Activated B cell treated with CpG ODN at 0.5 μM for 24 hours (primary cell): ENCODE measurements at regions of chr18 and their contacts with region 1.

Region 1: GRCh38 chr18:12890506-12890905 is 6.5 kb upstream of the PTPN2 start:
- DNase-seq: no peak
- ATAC-seq: no peak
- H3K4me3 Mint-ChIP-seq: no peak overlapping the region
- H3K27ac Mint-ChIP-seq: no peak overlapping the region
- H3K4me1 Mint-ChIP-seq: peaks cover 28% of the 10 kb centered on the region
- H3K27me3 Mint-ChIP-seq: peaks cover 7% of the 10 kb centered on the region
- CTCF ChIP-seq: no peak

Region 2: GRCh38 chr18:12391618-12392165 is 498.8 kb before region 1 on chr18:
- CTCF ChIA-PET with region 1: no interaction called
- POLR2A ChIA-PET with region 1: no interaction called
- intact Hi-C with region 1: loop called (anchors 5 kb)
- DNase-seq: no peak
- ATAC-seq: peak; percentile 98
- H3K4me3 Mint-ChIP-seq: no peak overlapping the region
- H3K27ac Mint-ChIP-seq: no peak overlapping the region
- H3K4me1 Mint-ChIP-seq: no peaks in the 10 kb centered on the region
- H3K27me3 Mint-ChIP-seq: peaks cover 13% of the 10 kb centered on the region
- CTCF ChIP-seq: no peak

Region 3: GRCh38 chr18:12726774-12727550 is 163.5 kb before region 1 on chr18:
- CTCF ChIA-PET with region 1: interaction called, 7 read pairs
- POLR2A ChIA-PET with region 1: interaction called, 7 read pairs
- intact Hi-C with region 1: loop called (anchors 1 kb)
- DNase-seq: no peak
- ATAC-seq: peak; percentile 60
- H3K4me3 Mint-ChIP-seq: no peak overlapping the region
- H3K27ac Mint-ChIP-seq: no peak overlapping the region
- H3K4me1 Mint-ChIP-seq: no peaks in the 10 kb centered on the region
- H3K27me3 Mint-ChIP-seq: no peaks in the 10 kb centered on the region
- CTCF ChIP-seq: peak; percentile 88

Region 4: GRCh38 chr18:12744103-12744502 is 146.4 kb before region 1 on chr18:
- CTCF ChIA-PET with region 1: interaction called, 16 read pairs
- POLR2A ChIA-PET with region 1: no interaction called
- intact Hi-C with region 1: loop called (anchors 1 kb)
- DNase-seq: no peak
- ATAC-seq: peak; percentile 47
- H3K4me3 Mint-ChIP-seq: no peak overlapping the region
- H3K27ac Mint-ChIP-seq: no peak overlapping the region
- H3K4me1 Mint-ChIP-seq: no peaks in the 10 kb centered on the region
- H3K27me3 Mint-ChIP-seq: peaks cover 7% of the 10 kb centered on the region
- CTCF ChIP-seq: no peak

Region 5: GRCh38 chr18:12934454-12935071 is 44.1 kb after region 1 on chr18:
- CTCF ChIA-PET with region 1: interaction called, 15 read pairs
- POLR2A ChIA-PET with region 1: no interaction called
- intact Hi-C with region 1: loop called (anchors 1 kb)
- DNase-seq: peak; percentile 62
- ATAC-seq: peak; percentile 89
- H3K4me3 Mint-ChIP-seq: no peak overlapping the region
- H3K27ac Mint-ChIP-seq: no peak overlapping the region
- H3K4me1 Mint-ChIP-seq: no peaks in the 10 kb centered on the region
- H3K27me3 Mint-ChIP-seq: peaks cover 3% of the 10 kb centered on the region
- CTCF ChIP-seq: no peak

Region 6: DNA sequence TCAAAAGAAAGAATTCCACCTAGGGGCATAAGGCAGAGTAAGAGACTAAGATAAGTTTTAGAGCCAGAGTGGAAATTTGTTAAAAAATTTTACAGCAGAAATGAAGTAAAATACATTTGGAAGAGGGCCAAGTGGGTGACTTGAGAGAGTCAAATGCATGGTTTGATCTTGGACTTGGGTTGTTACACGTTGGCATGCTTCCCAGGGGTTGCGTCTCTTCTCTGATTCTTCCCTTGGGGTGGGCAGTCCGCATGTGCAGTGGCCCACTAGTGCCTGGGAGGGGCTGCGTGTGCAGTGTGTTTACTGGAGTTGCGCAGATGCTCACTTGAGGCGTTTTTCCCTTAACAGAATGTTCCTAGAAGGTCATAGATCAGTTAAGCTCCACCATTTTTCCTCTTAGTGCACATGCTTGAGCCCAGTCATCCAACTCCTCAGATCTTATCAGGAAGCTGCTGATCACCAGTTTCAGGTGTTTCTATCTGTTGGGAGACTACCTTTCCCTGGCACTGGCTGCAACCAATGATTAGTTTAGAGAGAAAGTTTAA is 70.4 kb after region 1 on chr18:
- CTCF ChIA-PET with region 1: no interaction called
- POLR2A ChIA-PET with region 1: no interaction called
- intact Hi-C with region 1: no loop called
- DNase-seq: no peak
- ATAC-seq: no peak
- H3K4me3 Mint-ChIP-seq: no peak overlapping the region
- H3K27ac Mint-ChIP-seq: no peak overlapping the region
- H3K4me1 Mint-ChIP-seq: peaks cover 1% of the 10 kb centered on the region
- H3K27me3 Mint-ChIP-seq: no peaks in the 10 kb centered on the region
- CTCF ChIP-seq: no peak

Region 7: GRCh38 chr18:12973562-12974213 is 83.2 kb after region 1 on chr18:
- CTCF ChIA-PET with region 1: no interaction called
- POLR2A ChIA-PET with region 1: no interaction called
- intact Hi-C with region 1: no loop called
- DNase-seq: no peak
- ATAC-seq: no peak
- H3K4me3 Mint-ChIP-seq: no peak overlapping the region
- H3K27ac Mint-ChIP-seq: no peak overlapping the region
- H3K4me1 Mint-ChIP-seq: no peaks in the 10 kb centered on the region
- H3K27me3 Mint-ChIP-seq: no peaks in the 10 kb centered on the region
- CTCF ChIP-seq: no peak

Region 8: DNA sequence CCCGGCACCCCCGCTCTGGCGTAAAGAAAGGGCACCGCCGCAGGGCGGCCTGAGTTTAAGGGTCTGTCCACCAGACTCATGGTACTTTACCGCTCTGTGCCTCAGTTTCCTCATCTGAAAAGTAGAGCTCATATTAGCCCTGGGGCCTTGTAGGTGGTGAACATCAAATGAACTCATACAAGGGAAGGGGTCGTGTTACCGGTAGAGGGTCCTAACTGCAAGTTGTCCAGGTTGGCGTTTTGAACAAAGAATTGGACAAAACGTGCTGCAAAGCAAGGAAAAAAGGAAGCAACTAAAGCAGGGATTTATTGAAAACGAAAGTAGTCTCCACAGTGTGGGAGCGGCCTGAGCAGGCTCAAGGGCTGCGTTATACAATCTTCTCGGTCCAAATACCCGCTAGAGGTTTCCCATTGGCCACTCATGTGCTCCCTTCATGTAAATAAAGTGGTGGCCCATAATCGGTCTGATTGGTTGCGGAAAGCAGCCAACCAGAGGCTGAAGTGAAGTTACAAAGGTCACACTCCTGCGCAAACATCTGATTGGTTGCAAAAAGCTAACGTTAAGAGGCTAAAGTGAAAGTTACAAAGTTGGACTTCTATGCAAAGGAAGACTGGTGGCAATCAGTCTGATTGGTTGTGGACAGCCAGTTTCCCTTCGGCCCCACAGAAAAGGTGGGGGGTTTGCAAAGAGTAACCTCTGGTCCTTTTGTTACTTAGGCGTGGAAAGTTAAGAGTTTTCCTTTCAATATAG is 247.3 kb after region 1 on chr18:
- CTCF ChIA-PET with region 1: no interaction called
- POLR2A ChIA-PET with region 1: no interaction called
- intact Hi-C with region 1: loop called (anchors 1 kb)
- DNase-seq: peak; percentile 43
- ATAC-seq: peak; percentile 87
- H3K4me3 Mint-ChIP-seq: peak overlapping the region; percentile 98
- H3K27ac Mint-ChIP-seq: peak overlapping the region; percentile 97
- H3K4me1 Mint-ChIP-seq: peaks cover 23% of the 10 kb centered on the region
- H3K27me3 Mint-ChIP-seq: no peaks in the 10 kb centered on the region
- CTCF ChIP-seq: no peak